Vagina (tissue), 2 donors: ENCODE measurements at regions of chr2 and their contacts with region 1.

Region 1: GRCh38 chr2:42935692-42936681 is 143.6 kb upstream of the HAAO start:
- DNase-seq: no peak
- H3K4me3 ChIP-seq: no peak overlapping the region
- H3K27ac ChIP-seq: peak overlapping the region; percentile 20
- H3K4me1 ChIP-seq: peaks cover 78% of the 10 kb centered on the region
- H3K27me3 ChIP-seq: no peaks in the 10 kb centered on the region
- CTCF ChIP-seq: no peak
- POLR2A ChIP-seq: no peak

Region 2: GRCh38 chr2:42859006-42859552 is 76.9 kb before region 1 on chr2:
- intact Hi-C with region 1: loop called (anchors 5 kb)
- DNase-seq: no peak
- H3K4me3 ChIP-seq: no peak overlapping the region
- H3K27ac ChIP-seq: no peak overlapping the region
- H3K4me1 ChIP-seq: peaks cover 46% of the 10 kb centered on the region
- H3K27me3 ChIP-seq: no peaks in the 10 kb centered on the region
- CTCF ChIP-seq: peak; percentile 52 to 84 (median 81)
- POLR2A ChIP-seq: no peak

Region 3: GRCh38 chr2:42906557-42907411 is 29.2 kb before region 1 on chr2:
- intact Hi-C with region 1: no loop called
- DNase-seq: no peak
- H3K4me3 ChIP-seq: peak overlapping the region in 1 of 2 donors; percentile 18
- H3K27ac ChIP-seq: peak overlapping the region; percentile 77
- H3K4me1 ChIP-seq: peaks cover 66% of the 10 kb centered on the region
- H3K27me3 ChIP-seq: no peaks in the 10 kb centered on the region
- CTCF ChIP-seq: no peak
- POLR2A ChIP-seq: no peak